PC-3 (cell line): ENCODE measurements at regions of chr13 and their contacts with region 1.

Region 1: GRCh38 chr13:35157143-35157755 is 215.2 kb downstream of the NBEA start:
- DNase-seq: peak; percentile 73
- ATAC-seq: peak; percentile 43; the same call in 1 of the 2 replicates
- H3K4me3 ChIP-seq: no peak overlapping the region
- H3K27ac ChIP-seq: no peak overlapping the region
- H3K4me1 ChIP-seq: no peaks in the 10 kb centered on the region
- H3K27me3 ChIP-seq: no peaks in the 10 kb centered on the region
- CTCF ChIP-seq: peak; percentile 79

Region 2: DNA sequence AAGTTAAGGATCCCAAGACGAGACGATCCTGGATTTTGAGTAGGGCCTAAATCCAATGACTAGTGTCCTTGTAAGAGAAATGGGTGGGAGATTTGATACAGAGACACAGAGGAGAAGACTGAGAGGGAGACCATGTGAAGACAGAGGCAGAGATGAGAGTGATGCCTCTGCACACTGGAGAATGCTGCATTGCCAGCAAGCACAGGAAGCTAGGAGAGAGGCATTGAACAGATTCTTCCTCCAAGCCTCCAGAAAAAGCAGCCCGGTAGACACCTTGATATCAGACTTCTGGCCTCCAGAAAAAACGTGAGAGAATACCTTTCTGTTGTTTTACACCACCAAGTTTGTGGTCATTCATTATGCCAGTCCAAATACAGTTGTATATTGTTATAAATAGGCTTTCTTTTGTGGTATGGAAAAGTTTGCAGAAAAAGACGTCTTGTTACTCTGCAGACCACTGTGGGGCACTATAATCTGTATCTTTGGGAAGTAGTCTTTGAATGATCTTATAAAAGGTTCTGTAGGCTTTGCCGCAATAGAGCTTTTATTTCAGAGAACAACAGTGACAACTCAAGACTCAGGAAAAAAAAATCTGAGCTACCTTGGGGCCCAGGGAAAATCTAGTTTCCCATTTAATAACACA is 1357.2 kb before region 1 on chr13:
- CTCF ChIA-PET with region 1: no interaction called
- POLR2A ChIA-PET with region 1: no interaction called
- intact Hi-C with region 1: loop called (anchors 5 kb)
- DNase-seq: peak; percentile 46
- ATAC-seq: peak; percentile 51
- H3K4me3 ChIP-seq: peak overlapping the region; percentile 29; the same call in 1 of the 2 replicates
- H3K27ac ChIP-seq: no peak overlapping the region
- H3K4me1 ChIP-seq: peaks cover 19% of the 10 kb centered on the region
- H3K27me3 ChIP-seq: no peaks in the 10 kb centered on the region
- CTCF ChIP-seq: peak; percentile 64

Region 3: DNA sequence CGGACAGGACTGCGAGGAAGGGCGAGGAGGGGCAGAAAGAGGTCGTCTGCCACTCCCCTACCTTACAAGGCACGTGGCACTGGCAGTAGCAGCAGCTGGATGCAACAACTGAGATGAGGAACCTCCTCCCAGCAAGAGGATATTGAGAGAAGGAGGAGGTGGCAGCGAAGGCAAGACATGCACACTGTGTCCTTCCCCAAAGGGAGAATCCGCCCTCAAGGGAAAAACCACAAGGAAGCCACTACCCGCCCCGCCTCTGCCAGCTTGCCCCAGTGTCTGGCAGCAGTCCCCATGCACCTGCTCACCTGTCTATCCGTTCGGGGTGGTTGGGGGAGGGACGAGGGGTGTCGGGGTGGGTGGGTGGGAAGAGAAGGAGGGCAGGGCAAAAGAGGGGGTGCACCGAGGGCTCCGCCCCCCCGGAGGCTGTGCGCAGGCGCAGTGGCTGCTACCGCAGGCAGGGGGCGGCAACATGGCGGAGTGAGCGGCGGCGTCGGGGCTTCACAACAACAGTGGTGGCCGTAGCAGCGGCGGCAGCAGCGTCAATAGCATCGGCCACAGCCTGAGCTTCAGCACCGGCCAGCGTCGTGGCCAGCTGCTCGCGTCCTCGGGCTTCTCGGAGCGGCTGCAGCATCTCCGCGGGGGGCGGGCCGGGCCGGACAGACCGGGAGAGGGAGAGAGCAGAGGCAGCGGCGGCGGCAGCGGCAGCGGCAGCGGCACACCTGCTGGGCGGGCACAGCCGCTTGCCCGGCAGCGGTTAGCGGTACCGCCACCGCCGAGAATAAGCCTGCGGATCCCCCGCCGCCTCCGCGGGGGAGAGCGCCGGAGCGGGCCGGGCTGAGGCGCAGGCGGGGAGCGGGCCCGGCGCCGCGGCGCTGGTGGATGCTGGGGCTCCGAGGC is 215.2 kb before region 1 on chr13 and contains the start of gene NBEA:
- CTCF ChIA-PET with region 1: no interaction called
- POLR2A ChIA-PET with region 1: no interaction called
- intact Hi-C with region 1: loop called (anchors 5 kb)
- DNase-seq: peak; percentile 74
- ATAC-seq: peak; percentile 68
- H3K4me3 ChIP-seq: peak within 1 kb of the TSS; percentile 92
- H3K27ac ChIP-seq: no peak within 1 kb of the TSS
- H3K4me1 ChIP-seq: peaks cover 24% of the 10 kb centered on the region
- H3K27me3 ChIP-seq: no peaks in the 10 kb centered on the region
- CTCF ChIP-seq: no peak
- total RNA-seq, gene NBEA: 4.4 and 6.2 TPM in 2 replicates